PC-3 (cell line): ENCODE measurements at regions of chrX and their contacts with region 1.

Region 1: GRCh38 chrX:150062292-150063137 is 124.2 kb upstream of the EOLA2 start:
- DNase-seq: peak; percentile 78
- ATAC-seq: peak; percentile 89
- H3K4me3 ChIP-seq: no peak overlapping the region; the same call in 1 of the 2 replicates
- H3K27ac ChIP-seq: peak overlapping the region; percentile 67
- H3K4me1 ChIP-seq: peaks cover 35% of the 10 kb centered on the region
- H3K27me3 ChIP-seq: no peaks in the 10 kb centered on the region
- CTCF ChIP-seq: no peak

Region 2: GRCh38 chrX:150032741-150033140 is 29.8 kb before region 1 on chrX:
- CTCF ChIA-PET with region 1: no interaction called
- POLR2A ChIA-PET with region 1: no interaction called
- intact Hi-C with region 1: loop called (anchors 1 kb)
- DNase-seq: peak; percentile 87
- ATAC-seq: peak; percentile 84
- H3K4me3 ChIP-seq: peak overlapping the region; percentile 33; the same call in 1 of the 2 replicates
- H3K27ac ChIP-seq: peak overlapping the region; percentile 76
- H3K4me1 ChIP-seq: peaks cover 50% of the 10 kb centered on the region
- H3K27me3 ChIP-seq: no peaks in the 10 kb centered on the region
- CTCF ChIP-seq: no peak

Region 3: GRCh38 chrX:150094996-150095395 is 32.5 kb after region 1 on chrX:
- CTCF ChIA-PET with region 1: no interaction called
- POLR2A ChIA-PET with region 1: no interaction called
- intact Hi-C with region 1: no loop called
- DNase-seq: no peak
- ATAC-seq: peak; percentile 50
- H3K4me3 ChIP-seq: no peak overlapping the region
- H3K27ac ChIP-seq: no peak overlapping the region
- H3K4me1 ChIP-seq: no peaks in the 10 kb centered on the region; the same call in 1 of the 2 replicates
- H3K27me3 ChIP-seq: no peaks in the 10 kb centered on the region
- CTCF ChIP-seq: no peak